ENCODE measurements at regions of chr1 and their contacts with region 1.

Region 1: DNA sequence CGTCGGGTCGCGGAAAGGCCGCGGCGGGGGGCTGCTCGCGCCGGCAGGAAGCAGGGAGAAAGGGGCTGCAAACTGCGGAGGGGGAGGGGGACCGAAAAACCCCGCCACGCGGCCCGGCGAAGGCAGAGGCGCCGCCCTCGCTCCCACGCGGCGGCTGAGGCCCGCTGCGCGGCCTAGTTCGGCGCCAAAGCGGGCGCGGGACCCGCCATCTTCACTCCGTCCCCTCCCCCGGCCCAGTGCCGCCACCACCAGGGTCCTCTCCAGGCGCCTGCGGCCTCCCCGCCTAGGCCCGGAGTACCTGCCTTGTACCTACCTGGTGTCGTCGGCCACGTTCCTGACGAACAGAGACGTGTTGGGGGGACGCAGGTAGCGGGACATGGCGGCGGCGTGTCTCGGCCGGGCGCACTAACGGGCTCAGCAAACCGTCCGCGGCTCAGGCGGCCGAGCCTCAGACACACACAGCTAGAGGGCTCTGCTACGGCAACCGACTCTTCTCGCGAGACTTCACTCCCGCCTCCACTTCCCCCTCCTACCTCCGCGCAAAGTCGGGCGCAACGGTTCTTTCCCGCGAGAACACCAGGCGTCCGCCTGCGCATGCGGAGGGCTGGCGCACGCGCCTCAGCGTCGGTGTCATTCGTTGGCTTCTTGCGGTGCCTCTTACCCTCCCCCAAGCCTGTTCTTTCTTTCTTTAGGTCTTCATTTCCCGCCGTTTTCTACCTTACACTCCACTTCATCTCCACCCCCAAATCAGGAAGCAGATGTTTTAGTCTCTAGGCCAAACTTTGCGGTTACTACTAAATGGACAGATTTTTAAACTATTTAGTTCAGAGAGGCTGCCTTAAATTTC is at the start of gene SRSF10:
- DNase-seq: peak; percentile 95
- ATAC-seq: peak; percentile 91
- H3K4me3 Mint-ChIP-seq: peak within 1 kb of the TSS; percentile 93
- H3K27ac Mint-ChIP-seq: peak within 1 kb of the TSS; percentile 98
- H3K4me1 Mint-ChIP-seq: peaks cover 37% of the 10 kb centered on the region
- H3K27me3 Mint-ChIP-seq: no peaks in the 10 kb centered on the region
- total RNA-seq, gene SRSF10: 202 to 223 TPM

Region 2: DNA sequence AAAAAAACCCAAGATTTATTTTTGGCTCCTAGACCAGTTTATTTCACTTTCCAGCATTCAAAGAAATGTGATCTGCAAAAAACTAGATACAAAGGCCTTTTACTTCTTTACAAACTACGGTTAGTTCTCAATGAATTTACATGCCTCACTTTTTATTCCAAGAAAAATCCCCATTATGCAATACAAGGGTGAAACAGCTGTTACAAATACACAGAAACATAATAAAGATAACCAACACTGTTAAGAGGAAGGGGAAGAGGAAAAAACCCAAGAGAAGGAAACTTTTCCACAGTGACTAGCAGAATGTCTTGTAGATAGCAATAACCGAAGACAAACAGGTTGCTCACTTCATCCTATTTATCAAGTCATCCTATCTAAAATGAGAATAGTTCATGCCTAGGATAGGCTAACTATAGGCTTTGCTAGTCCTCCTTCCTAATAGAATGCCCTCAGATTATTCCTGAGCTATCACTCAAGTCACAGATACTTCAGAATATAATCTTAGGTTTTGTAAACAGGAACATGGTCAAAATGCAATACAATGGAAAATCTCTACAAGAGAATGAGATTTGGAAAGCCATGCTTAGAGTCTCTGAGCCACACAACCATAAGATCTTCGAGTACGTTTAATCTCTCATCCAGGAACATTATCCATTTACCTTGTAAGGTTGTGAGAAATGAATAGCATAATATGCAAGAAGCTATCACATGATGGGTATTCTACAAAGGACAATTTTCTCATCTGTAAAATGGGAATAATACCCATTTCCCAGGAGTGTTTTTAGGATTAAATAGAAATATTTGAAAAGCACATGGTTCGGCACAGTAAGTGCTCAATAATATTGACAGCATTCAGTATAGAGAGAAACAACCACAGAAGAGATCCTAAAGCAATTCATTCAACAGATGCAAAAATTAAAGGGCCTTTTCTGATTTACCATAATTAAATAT is 15.0 kb before region 1 on chr1:
- POLR2A ChIA-PET with region 1: interaction called, 155 read pairs
- DNase-seq: no peak
- ATAC-seq: no peak
- H3K4me3 Mint-ChIP-seq: peak overlapping the region; percentile 12
- H3K27ac Mint-ChIP-seq: peak overlapping the region; percentile 69
- H3K4me1 Mint-ChIP-seq: peaks cover 53% of the 10 kb centered on the region
- H3K27me3 Mint-ChIP-seq: no peaks in the 10 kb centered on the region

Measured in activated naive CD8-positive, alpha-beta T cell treated with anti-CD3 and anti-CD28 coated beads, Interleukin-2, amount 10 ng/mL, durations not matched to agents 7 days and 5 days (primary cell).